CD14-positive monocyte (primary cell): ENCODE measurements at regions of chr5 and their contacts with region 1.

Region 1: GRCh38 chr5:157731272-157732129 is at the start of gene THG1L:
- DNase-seq: peak; percentile 92 to 98 (median 97)
- H3K4me3 ChIP-seq: peak within 1 kb of the TSS; percentile 64 to 86 (median 70)
- H3K4me3 Mint-ChIP-seq: peak within 1 kb of the TSS; percentile 97
- H3K27ac ChIP-seq: peak within 1 kb of the TSS; percentile 91 to 93
- H3K27ac Mint-ChIP-seq: peak within 1 kb of the TSS; percentile 98 to 100 (median 99)
- H3K4me1 ChIP-seq: peaks cover 6 to 10% of the 10 kb centered on the region in 2 donors
- H3K4me1 Mint-ChIP-seq: peaks cover 8% of the 10 kb centered on the region
- H3K27me3 ChIP-seq: no peaks in the 10 kb centered on the region
- H3K27me3 Mint-ChIP-seq: peaks cover 0 to 2% (median 0%) of the 10 kb centered on the region in 3 donors
- CTCF ChIP-seq: no peak
- polyA plus RNA-seq, gene THG1L: 7.6 to 12.2 (median 7.6) TPM

Region 2: GRCh38 chr5:157494178-157494832 is 237.2 kb before region 1 on chr5:
- intact Hi-C with region 1: loop called in 1 of 2 experiments (anchors 5 kb)
- DNase-seq: peak; percentile 89 to 97 (median 95)
- H3K4me3 ChIP-seq: no peak overlapping the region
- H3K4me3 Mint-ChIP-seq: no peak overlapping the region
- H3K27ac ChIP-seq: peak overlapping the region; percentile 54 to 73
- H3K27ac Mint-ChIP-seq: peak overlapping the region; percentile 84 to 97 (median 95)
- H3K4me1 ChIP-seq: peaks cover 17 to 18% of the 10 kb centered on the region in 2 donors
- H3K4me1 Mint-ChIP-seq: peaks cover 18% of the 10 kb centered on the region
- H3K27me3 ChIP-seq: no peaks in the 10 kb centered on the region
- H3K27me3 Mint-ChIP-seq: peaks cover 0 to 6% (median 1%) of the 10 kb centered on the region in 3 donors
- CTCF ChIP-seq: no peak

Region 3: GRCh38 chr5:157670662-157671591 is 60.6 kb before region 1 on chr5 and contains the start of gene C5orf52:
- intact Hi-C with region 1: loop called in 1 of 2 experiments (anchors 5 kb)
- DNase-seq: peak; percentile 29 to 61 (median 54)
- H3K4me3 ChIP-seq: peak within 1 kb of the TSS; percentile 50 to 79 (median 59)
- H3K4me3 Mint-ChIP-seq: peak within 1 kb of the TSS; percentile 92 to 99
- H3K27ac ChIP-seq: no peak within 1 kb of the TSS
- H3K27ac Mint-ChIP-seq: peak within 1 kb of the TSS; percentile 37 to 81 (median 62)
- H3K4me1 ChIP-seq: peaks cover 20 to 23% of the 10 kb centered on the region in 2 donors
- H3K4me1 Mint-ChIP-seq: peaks cover 27% of the 10 kb centered on the region
- H3K27me3 ChIP-seq: peaks cover 5 to 40% of the 10 kb centered on the region in 2 donors
- H3K27me3 Mint-ChIP-seq: peaks cover 36 to 61% (median 57%) of the 10 kb centered on the region in 3 donors
- CTCF ChIP-seq: no peak
- polyA plus RNA-seq, gene C5orf52: not detected